CD14-positive monocyte (primary cell): ENCODE measurements at regions of chr5 and their contacts with region 1.

Region 1: GRCh38 chr5:133552931-133553525 is 59.3 kb downstream of the FSTL4 start:
- DNase-seq: peak; percentile 15 to 40 (median 24)
- H3K4me3 ChIP-seq: no peak overlapping the region
- H3K4me3 Mint-ChIP-seq: no peak overlapping the region
- H3K27ac ChIP-seq: no peak overlapping the region
- H3K27ac Mint-ChIP-seq: no peak overlapping the region
- H3K4me1 ChIP-seq: no peaks in the 10 kb centered on the region
- H3K4me1 Mint-ChIP-seq: no peaks in the 10 kb centered on the region
- H3K27me3 ChIP-seq: peaks cover 6 to 14% of the 10 kb centered on the region in 2 donors
- H3K27me3 Mint-ChIP-seq: peaks cover 12 to 34% (median 22%) of the 10 kb centered on the region in 3 donors
- CTCF ChIP-seq: peak; percentile 94

Region 2: DNA sequence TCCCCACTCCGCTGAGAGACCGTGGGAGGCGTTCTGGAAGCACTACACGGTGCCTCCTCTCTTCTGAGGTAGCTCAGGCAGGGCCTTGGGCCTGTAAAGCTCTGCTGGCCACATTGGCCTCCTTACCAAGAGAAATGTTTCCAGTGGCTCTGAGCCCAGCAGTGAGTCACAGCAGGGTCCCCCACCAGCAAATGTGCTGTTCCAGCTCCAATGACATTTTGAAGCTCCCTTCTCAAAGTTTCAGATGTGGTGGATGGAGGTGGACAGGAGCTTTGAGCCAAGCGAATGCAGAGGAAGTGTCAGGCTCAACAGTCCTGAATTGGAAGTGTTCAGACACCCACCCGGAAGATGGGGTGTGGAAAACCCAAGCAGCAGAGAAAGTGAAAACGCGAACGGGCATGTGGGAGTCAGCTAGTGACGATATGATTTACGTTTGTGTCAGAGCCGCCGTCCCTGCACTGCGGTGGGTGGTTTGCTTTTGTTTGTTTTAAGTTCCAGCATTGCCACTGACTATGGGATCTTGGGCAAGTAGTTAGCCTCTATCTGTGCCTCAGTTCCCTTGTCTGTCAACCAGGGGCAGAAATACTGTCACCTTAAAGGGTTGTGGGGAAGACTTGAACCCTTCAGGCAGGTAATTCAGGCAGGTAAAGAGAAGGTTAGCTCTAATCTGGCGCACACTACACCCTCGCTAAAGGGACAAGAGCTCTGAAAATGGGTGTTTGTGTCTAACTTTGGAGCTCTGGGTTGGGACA is 377.2 kb after region 1 on chr5:
- intact Hi-C with region 1: loop called in 1 of 2 experiments (anchors 10 kb)
- DNase-seq: peak in 2 of 3 donors; percentile 14 to 36
- H3K4me3 ChIP-seq: peak overlapping the region in 2 of 3 experiments; percentile 8 to 54
- H3K4me3 Mint-ChIP-seq: peak overlapping the region; percentile 70 to 87
- H3K27ac ChIP-seq: peak overlapping the region in 1 of 2 donors; percentile 12
- H3K27ac Mint-ChIP-seq: peak overlapping the region; percentile 41 to 73 (median 66)
- H3K4me1 ChIP-seq: peaks cover 29 to 36% of the 10 kb centered on the region in 2 donors
- H3K4me1 Mint-ChIP-seq: peaks cover 34% of the 10 kb centered on the region
- H3K27me3 ChIP-seq: no peaks in the 10 kb centered on the region
- H3K27me3 Mint-ChIP-seq: peaks cover 5 to 10% (median 6%) of the 10 kb centered on the region in 3 donors
- CTCF ChIP-seq: no peak